Activated CD8-positive, alpha-beta T cell treated with anti-CD3 and anti-CD28 coated beads for 36 hours (primary cell): ENCODE measurements at regions of chr2 and their contacts with region 1.

Region 1: DNA sequence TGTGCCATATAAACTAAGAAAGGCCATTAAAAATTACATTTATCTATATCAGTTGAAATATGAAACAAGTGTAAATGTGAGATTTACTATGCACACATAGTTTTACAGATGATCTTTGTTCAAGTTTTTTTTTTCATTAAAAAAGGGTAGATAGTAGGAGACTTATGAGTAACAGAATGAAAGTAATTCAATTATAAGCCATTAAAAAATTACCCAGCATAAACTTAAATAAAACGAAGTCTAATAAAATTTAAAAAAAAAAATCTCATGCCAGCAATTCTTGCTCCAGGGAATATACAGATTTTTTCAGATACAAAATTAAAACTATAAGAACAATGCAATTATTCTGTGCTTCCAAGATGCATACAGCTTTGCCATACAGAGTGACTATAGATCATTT is 118.3 kb upstream of the RNU4ATAC start:
- DNase-seq: no peak
- ATAC-seq: no peak
- H3K4me3 Mint-ChIP-seq: no peak overlapping the region
- H3K27ac Mint-ChIP-seq: no peak overlapping the region
- H3K4me1 Mint-ChIP-seq: no peaks in the 10 kb centered on the region
- H3K27me3 Mint-ChIP-seq: no peaks in the 10 kb centered on the region
- CTCF ChIP-seq: no peak

Region 2: DNA sequence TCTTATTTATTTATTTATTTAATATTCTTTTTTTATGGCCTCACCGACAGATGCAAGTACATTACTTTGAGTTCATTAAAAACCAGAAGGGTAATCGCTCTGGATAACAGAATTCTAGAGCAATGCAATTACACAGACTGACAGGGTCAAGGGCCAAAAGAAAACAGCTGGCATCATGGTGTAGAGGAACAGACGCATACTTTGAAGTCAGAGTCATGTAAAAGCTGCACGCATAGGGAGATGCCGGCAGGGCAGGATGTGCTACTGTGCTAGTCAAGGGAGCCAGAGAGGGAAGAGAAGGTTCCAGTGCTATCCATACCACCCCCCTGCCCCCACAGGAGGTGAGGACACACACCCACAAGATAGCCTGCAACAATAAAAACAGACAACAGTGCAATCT is 12.1 kb before region 1 on chr2:
- CTCF ChIA-PET with region 1: interaction called, 23 read pairs
- POLR2A ChIA-PET with region 1: no interaction called
- intact Hi-C with region 1: no loop called
- DNase-seq: no peak
- ATAC-seq: no peak
- H3K4me3 Mint-ChIP-seq: no peak overlapping the region
- H3K27ac Mint-ChIP-seq: no peak overlapping the region
- H3K4me1 Mint-ChIP-seq: no peaks in the 10 kb centered on the region
- H3K27me3 Mint-ChIP-seq: no peaks in the 10 kb centered on the region
- CTCF ChIP-seq: no peak

Region 3: GRCh38 chr2:121431214-121431613 is 18.9 kb after region 1 on chr2:
- CTCF ChIA-PET with region 1: no interaction called
- POLR2A ChIA-PET with region 1: no interaction called
- intact Hi-C with region 1: no loop called
- DNase-seq: no peak
- ATAC-seq: no peak
- H3K4me3 Mint-ChIP-seq: no peak overlapping the region
- H3K27ac Mint-ChIP-seq: no peak overlapping the region
- H3K4me1 Mint-ChIP-seq: no peaks in the 10 kb centered on the region
- H3K27me3 Mint-ChIP-seq: no peaks in the 10 kb centered on the region
- CTCF ChIP-seq: no peak